Heart left ventricle (tissue), 16 donors: ENCODE measurements at regions of chr10 and their contacts with region 1.

Region 1: GRCh38 chr10:96374985-96375830 is 16.4 kb upstream of the OPALIN start:
- DNase-seq: peak; percentile 82 to 91 (median 86)
- ATAC-seq: peak; percentile 53 to 90 (median 86)
- H3K4me3 ChIP-seq: peak overlapping the region; percentile 7 to 63 (median 49)
- H3K27ac ChIP-seq: peak overlapping the region in 3 of 12 donors; percentile 11 to 24 (median 20)
- H3K4me1 ChIP-seq: peaks cover 0 to 31% (median 11%) of the 10 kb centered on the region in 12 donors
- H3K27me3 ChIP-seq: no peaks in the 10 kb centered on the region
- CTCF ChIP-seq: peak; percentile 92 to 100 (median 96)
- POLR2A ChIP-seq: no peak

Region 2: GRCh38 chr10:95880704-95881103 is 494.5 kb before region 1 on chr10:
- intact Hi-C with region 1: no loop called
- DNase-seq: no peak
- ATAC-seq: no peak
- H3K4me3 ChIP-seq: no peak overlapping the region
- H3K27ac ChIP-seq: no peak overlapping the region
- H3K4me1 ChIP-seq: peaks cover 0 to 9% (median 0%) of the 10 kb centered on the region in 12 donors
- H3K27me3 ChIP-seq: no peaks in the 10 kb centered on the region
- CTCF ChIP-seq: no peak
- POLR2A ChIP-seq: no peak

Region 3: GRCh38 chr10:96390460-96390864 is 15.3 kb after region 1 on chr10:
- intact Hi-C with region 1: loop called in 1 of 10 experiments (anchors 2 kb)
- DNase-seq: peak; percentile 75 to 87 (median 82)
- ATAC-seq: peak; percentile 92 to 96 (median 95)
- H3K4me3 ChIP-seq: no peak overlapping the region
- H3K27ac ChIP-seq: peak overlapping the region in 9 of 12 donors; percentile 16 to 67 (median 58)
- H3K4me1 ChIP-seq: peaks cover 0 to 17% (median 5%) of the 10 kb centered on the region in 12 donors
- H3K27me3 ChIP-seq: no peaks in the 10 kb centered on the region
- CTCF ChIP-seq: no peak
- POLR2A ChIP-seq: no peak

Region 4: DNA sequence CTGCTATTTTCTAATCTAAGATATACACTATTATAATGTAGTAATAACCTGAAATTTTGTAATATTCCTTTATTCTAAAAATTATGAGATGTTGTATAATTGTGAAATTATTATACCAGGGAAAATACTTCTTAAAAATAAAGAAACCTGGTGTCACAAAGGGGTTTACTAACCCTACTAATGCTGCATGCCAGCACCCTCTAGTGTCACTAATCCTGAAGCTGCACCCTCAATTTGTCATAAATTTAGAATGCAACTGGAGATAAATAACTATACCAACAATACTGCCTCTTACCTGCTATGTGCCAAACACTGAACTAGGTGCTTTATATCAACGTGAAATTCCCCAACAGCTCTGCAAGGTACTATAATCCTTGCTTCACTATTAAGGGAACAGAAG is 180.8 kb after region 1 on chr10:
- intact Hi-C with region 1: loop called in 1 of 10 experiments (anchors 5 kb)
- DNase-seq: no peak
- ATAC-seq: no peak
- H3K4me3 ChIP-seq: no peak overlapping the region
- H3K27ac ChIP-seq: no peak overlapping the region
- H3K4me1 ChIP-seq: peaks cover 0 to 5% (median 0%) of the 10 kb centered on the region in 12 donors
- H3K27me3 ChIP-seq: no peaks in the 10 kb centered on the region
- CTCF ChIP-seq: peak; percentile 13 to 63 (median 46)
- POLR2A ChIP-seq: no peak

Region 5: DNA sequence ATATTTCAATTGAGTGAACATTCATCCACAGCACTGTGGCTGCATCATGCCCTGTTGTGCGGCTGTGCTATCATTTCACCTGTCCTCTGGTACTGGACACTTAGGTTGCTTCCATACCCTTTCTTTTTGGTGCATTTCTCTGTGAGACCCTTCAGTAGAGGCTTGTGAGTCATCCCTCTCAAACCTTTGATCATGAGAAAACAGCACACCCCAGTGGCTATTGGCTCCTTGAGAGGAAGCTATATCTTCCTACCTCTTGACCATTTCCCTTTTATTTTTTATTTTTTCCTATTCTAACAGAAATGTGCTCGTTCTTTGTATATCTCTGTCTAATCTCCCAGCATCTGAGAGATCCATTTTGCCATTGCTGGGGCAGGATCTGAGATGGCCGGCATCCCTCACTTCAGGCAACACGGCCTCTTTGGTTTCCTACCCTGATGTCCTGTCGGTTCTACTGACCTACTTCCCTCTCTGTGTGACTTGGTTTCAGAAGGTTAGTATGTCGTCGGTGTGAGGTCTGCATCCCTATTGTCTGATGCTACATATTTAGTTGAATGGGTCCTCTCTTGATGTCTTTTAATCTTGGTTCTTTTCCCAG is 368.9 kb after region 1 on chr10:
- intact Hi-C with region 1: loop called in 1 of 10 experiments (anchors 10 kb)
- DNase-seq: no peak
- ATAC-seq: peak in 2 of 4 donors; percentile 42 to 56
- H3K4me3 ChIP-seq: no peak overlapping the region
- H3K27ac ChIP-seq: no peak overlapping the region
- H3K4me1 ChIP-seq: peaks cover 0 to 43% (median 0%) of the 10 kb centered on the region in 12 donors
- H3K27me3 ChIP-seq: no peaks in the 10 kb centered on the region
- CTCF ChIP-seq: peak in 11 of 12 donors; percentile 7 to 43 (median 24)
- POLR2A ChIP-seq: no peak

Region 6: DNA sequence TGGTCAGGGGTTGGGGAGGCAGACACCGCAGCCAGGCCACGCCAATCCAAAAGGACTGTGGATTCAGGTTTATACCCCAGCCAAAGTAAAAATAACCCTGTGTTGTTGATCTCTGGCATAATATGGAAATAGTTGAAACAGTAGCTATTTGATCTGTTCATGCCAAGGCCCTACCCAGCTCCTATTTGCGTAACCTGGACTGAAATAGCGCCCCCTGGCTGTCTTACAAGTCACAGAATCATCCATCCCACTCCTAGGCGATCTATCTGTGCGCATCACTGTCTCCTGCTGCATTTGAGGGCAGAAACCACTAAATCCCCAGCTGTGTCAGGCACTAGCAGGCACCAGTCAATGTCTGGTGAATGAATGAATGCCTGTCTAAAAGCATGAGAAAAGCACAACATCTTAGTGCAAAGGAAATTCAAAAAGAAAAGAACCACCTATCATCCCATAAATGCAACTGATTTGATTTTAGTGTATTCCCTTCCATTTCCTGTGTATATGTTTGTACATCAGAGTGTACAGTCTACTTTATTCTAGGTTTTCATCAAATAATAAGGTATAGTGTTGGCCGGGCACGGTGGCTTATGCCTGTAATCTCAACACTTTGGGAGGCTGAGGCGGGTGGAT is 650.5 kb after region 1 on chr10:
- intact Hi-C with region 1: loop called in 3 of 10 experiments (anchors 5 to 10 kb)
- DNase-seq: peak in 3 of 5 donors; percentile 32 to 49 (median 40)
- ATAC-seq: peak in 3 of 4 donors; percentile 31 to 45 (median 34)
- H3K4me3 ChIP-seq: no peak overlapping the region
- H3K27ac ChIP-seq: peak overlapping the region in 2 of 12 donors; percentile 11 to 67
- H3K4me1 ChIP-seq: peaks cover 0 to 28% (median 15%) of the 10 kb centered on the region in 12 donors
- H3K27me3 ChIP-seq: no peaks in the 10 kb centered on the region
- CTCF ChIP-seq: peak; percentile 50 to 73 (median 67)
- POLR2A ChIP-seq: no peak